Upper lobe of right lung (tissue), 1 donor: ENCODE measurements at regions of chr16 and their contacts with region 1.

Region 1: GRCh38 chr16:86519649-86520316 is 9.5 kb downstream of the FOXF1 start:
- DNase-seq: peak; percentile 78
- ATAC-seq: peak; percentile 59
- H3K4me3 ChIP-seq: peak overlapping the region; percentile 28
- H3K27ac ChIP-seq: peak overlapping the region; percentile 20
- H3K4me1 ChIP-seq: no peaks in the 10 kb centered on the region
- H3K27me3 ChIP-seq: peaks cover 59% of the 10 kb centered on the region
- CTCF ChIP-seq: peak; percentile 94

Region 2: GRCh38 chr16:85821441-85822135 is 698.2 kb before region 1 on chr16:
- intact Hi-C with region 1: loop called (anchors 10 kb)
- DNase-seq: peak; percentile 87
- ATAC-seq: peak; percentile 97
- H3K4me3 ChIP-seq: no peak overlapping the region
- H3K27ac ChIP-seq: no peak overlapping the region
- H3K4me1 ChIP-seq: no peaks in the 10 kb centered on the region
- H3K27me3 ChIP-seq: peaks cover 10% of the 10 kb centered on the region
- CTCF ChIP-seq: peak; percentile 99

Region 3: DNA sequence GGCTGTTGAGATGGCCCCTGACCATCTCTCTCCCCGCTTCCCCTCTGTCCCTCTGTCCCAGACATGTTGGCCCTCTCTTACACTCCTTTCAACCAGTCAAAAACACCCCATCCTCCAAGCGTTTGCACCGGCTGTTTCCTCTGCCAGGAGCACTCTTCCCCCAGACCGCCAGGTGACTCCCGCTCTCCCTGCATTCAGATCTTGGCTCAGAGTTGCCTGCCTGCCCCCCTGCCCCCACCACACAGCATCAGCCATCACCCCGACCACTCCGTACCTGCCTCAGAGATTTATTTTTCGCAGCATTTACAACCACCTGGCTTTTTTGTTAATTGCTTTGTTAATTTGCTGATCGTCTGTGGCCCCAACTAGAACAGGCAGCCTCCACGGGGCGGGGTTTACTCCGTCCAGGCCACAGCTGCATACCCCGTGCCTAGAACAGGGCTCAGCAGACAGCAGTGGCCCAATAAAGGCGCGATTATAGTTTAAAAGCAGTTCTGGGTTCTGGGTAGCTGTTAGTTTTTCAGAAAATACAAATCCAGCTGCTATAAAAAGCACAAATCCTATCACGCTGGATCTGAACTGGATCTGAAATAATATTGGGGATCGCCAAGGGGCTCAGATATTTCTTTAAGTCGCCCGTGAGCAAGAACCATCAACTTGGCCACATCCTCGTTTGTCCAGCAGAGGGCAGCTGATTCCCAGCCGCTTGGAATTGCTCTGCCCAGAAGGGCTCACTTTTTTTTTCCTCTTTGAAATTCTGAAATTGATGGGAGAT is 447.3 kb before region 1 on chr16:
- intact Hi-C with region 1: loop called (anchors 5 kb)
- DNase-seq: no peak
- ATAC-seq: peak; percentile 42
- H3K4me3 ChIP-seq: no peak overlapping the region
- H3K27ac ChIP-seq: no peak overlapping the region
- H3K4me1 ChIP-seq: peaks cover 3% of the 10 kb centered on the region
- H3K27me3 ChIP-seq: peaks cover 11% of the 10 kb centered on the region
- CTCF ChIP-seq: peak; percentile 84

Region 4: GRCh38 chr16:86195863-86196630 is 323.7 kb before region 1 on chr16:
- intact Hi-C with region 1: loop called (anchors 5 kb)
- DNase-seq: no peak
- ATAC-seq: no peak
- H3K4me3 ChIP-seq: peak overlapping the region; percentile 6
- H3K27ac ChIP-seq: peak overlapping the region; percentile 70
- H3K4me1 ChIP-seq: no peaks in the 10 kb centered on the region
- H3K27me3 ChIP-seq: peaks cover 53% of the 10 kb centered on the region
- CTCF ChIP-seq: no peak

Region 5: DNA sequence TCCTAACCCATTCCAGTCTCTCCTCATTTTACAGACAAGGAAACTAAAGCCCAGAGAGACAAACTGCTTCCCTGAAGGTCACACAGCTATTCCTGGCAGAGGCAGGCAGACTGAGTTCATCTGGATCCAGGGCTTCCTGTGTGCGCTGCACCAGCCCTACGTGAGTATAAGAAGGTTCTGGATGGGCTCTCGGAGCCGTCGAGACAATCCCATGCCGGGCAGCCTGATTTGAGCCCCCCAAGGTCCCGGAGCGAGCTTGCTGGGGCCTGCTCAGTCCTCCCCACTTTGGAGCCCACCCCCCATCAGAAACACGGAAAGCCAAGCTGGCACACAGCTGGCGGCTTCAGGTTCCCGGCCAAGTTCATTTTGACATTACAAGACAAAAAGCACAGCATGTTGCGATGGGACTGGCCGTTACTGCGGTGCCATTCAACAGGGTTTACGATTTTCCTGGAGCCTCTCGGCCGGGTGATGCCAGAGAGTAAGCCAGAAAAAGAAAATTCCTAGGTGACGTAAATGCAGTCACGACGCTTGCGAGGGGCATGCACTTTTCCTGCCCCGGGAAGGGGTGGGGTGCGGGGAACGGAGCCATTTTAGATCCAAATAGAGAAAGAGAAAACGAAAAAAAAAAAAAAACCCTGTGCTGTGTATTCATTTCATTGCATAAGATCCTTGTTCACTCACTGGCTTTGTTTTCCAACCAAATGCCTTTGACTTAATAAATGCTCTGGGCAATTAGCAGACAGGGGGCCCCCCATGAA is 176.6 kb before region 1 on chr16:
- intact Hi-C with region 1: loop called (anchors 10 kb)
- DNase-seq: no peak
- ATAC-seq: peak; percentile 14
- H3K4me3 ChIP-seq: peak overlapping the region; percentile 25
- H3K27ac ChIP-seq: peak overlapping the region; percentile 71
- H3K4me1 ChIP-seq: peaks cover 14% of the 10 kb centered on the region
- H3K27me3 ChIP-seq: peaks cover 7% of the 10 kb centered on the region
- CTCF ChIP-seq: no peak